Posterior vena cava (tissue), 2 donors: ENCODE measurements at regions of chr2 and their contacts with region 1.

Region 1: DNA sequence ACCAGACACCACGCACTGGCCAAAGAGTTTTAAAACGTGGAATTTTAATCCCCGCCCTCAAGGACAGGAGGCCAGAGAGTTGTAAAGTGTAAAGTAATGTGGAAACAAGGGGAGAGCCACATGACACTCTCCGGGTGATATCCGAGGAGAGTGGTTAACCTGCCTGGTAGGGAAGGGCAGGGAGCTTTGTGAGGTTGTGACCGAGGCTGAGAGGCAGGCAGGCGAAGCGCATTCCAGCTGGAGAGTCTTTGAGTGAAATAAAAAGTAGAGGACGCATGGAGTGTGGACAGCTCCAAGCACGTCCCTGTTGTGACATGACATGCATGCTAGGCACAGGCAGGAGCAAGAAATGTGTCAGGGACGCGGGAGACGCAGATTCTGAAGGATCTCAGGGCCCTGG is 539.5 kb downstream of the RNF144A start:
- DNase-seq: no peak

Region 2: GRCh38 chr2:7417845-7418742 is 38.7 kb before region 1 on chr2:
- intact Hi-C with region 1: no loop called
- DNase-seq: no peak

Region 3: DNA sequence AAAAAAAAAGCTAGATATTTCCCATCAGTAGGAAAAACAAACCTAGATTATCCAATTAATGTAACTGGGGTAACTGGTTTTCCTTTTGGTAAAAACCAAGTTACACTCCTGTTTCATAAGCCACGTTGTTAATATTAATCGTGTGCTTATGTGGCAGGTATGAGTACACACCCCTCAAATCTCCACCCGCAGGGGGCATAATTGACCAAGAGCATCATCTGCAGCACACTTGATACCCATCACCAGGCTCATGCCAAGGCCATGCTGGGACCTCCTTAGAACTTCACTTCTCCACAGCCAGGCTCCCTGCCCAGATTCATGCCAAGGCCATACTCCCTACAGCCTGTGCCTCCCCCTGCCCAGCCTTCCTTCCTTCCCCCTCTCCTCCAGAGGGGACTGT is 1504.8 kb after region 1 on chr2:
- intact Hi-C with region 1: loop called in 1 of 2 experiments (anchors 5 kb)
- DNase-seq: no peak